Panc1 (cell line): ENCODE measurements at regions of chr6 and their contacts with region 1.

Region 1: GRCh38 chr6:146700078-146700686 is 101.4 kb downstream of the ADGB start:
- DNase-seq: peak; percentile 64
- ATAC-seq: peak; percentile 53; the same call in 1 of the 2 replicates
- H3K4me3 ChIP-seq: no peak overlapping the region
- H3K27ac ChIP-seq: no peak overlapping the region
- H3K4me1 ChIP-seq: no peaks in the 10 kb centered on the region
- H3K27me3 ChIP-seq: no peaks in the 10 kb centered on the region
- CTCF ChIP-seq: peak; percentile 77

Region 2: DNA sequence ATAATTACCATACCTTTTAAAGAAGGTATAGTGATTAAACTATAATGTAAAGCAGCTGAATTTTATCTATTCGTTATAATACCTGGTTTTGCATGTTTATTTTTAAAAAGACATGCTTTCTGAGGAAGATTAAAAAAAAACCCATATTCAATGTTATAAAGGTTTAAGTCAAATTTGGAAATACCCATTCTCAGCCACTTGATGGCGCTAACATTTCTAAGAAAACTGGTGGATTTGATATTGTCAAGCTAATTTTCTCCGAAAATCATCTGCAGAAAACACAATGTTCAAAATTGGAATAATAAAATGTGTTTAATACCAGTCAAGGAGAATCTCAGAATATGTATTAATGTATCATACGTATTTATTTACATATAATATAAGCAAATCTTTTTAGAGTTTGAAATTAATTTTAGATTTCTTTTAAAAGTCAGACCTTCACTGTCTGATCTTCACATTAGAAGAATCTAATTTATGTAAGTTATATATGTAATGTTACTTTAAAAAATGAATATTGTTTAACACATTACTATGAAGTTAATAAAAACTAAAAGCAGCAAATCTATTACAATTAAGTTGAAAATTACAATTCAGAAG is 771.0 kb before region 1 on chr6:
- CTCF ChIA-PET with region 1: no interaction called
- POLR2A ChIA-PET with region 1: no interaction called
- in situ Hi-C with region 1: no loop called
- intact Hi-C with region 1: loop called (anchors 10 kb)
- DNase-seq: peak; percentile 24
- ATAC-seq: no peak
- H3K4me3 ChIP-seq: no peak overlapping the region
- H3K27ac ChIP-seq: no peak overlapping the region
- H3K4me1 ChIP-seq: no peaks in the 10 kb centered on the region
- H3K27me3 ChIP-seq: no peaks in the 10 kb centered on the region
- CTCF ChIP-seq: peak; percentile 75; the same call in 1 of the 2 replicates

Region 3: DNA sequence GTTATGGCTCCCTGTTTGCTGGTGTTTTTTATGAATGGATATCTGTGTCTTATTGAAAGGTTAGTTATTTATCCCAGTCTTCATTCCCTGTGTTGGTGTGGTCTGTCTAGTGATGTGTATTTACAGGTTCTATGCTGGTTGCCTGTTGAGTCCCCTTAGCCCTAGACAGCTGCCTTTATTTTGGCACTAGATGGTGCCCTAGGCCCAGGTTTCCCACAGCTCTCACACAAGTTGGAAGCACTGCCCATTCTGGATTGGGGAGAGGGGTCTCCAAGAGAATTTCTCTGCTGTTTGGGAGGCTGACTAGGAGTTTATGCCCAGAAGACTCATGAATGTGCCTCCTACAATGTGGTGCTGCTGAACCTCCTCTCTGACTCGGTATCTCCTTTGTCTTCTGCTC is 658.9 kb before region 1 on chr6:
- CTCF ChIA-PET with region 1: no interaction called
- POLR2A ChIA-PET with region 1: no interaction called
- in situ Hi-C with region 1: no loop called
- intact Hi-C with region 1: loop called (anchors 5 kb)
- DNase-seq: peak; percentile 12
- ATAC-seq: peak; percentile 68; the same call in 1 of the 2 replicates
- H3K4me3 ChIP-seq: no peak overlapping the region
- H3K27ac ChIP-seq: no peak overlapping the region
- H3K4me1 ChIP-seq: no peaks in the 10 kb centered on the region
- H3K27me3 ChIP-seq: no peaks in the 10 kb centered on the region; the same call in 1 of the 2 replicates
- CTCF ChIP-seq: peak; percentile 62

Region 4: GRCh38 chr6:146543211-146543939 is 156.8 kb before region 1 on chr6 and contains the start of gene RAB32:
- CTCF ChIA-PET with region 1: no interaction called
- POLR2A ChIA-PET with region 1: no interaction called
- in situ Hi-C with region 1: no loop called
- intact Hi-C with region 1: loop called (anchors 1 kb)
- DNase-seq: no peak
- ATAC-seq: peak; percentile 99
- H3K4me3 ChIP-seq: peak within 1 kb of the TSS; percentile 89 to 95
- H3K27ac ChIP-seq: peak within 1 kb of the TSS; percentile 92
- H3K4me1 ChIP-seq: peaks cover 14% of the 10 kb centered on the region
- H3K27me3 ChIP-seq: no peaks in the 10 kb centered on the region
- CTCF ChIP-seq: peak; percentile 86
- total RNA-seq, gene RAB32: 61.5 TPM

Region 5: GRCh38 chr6:146719387-146719786 is 19.2 kb after region 1 on chr6:
- CTCF ChIA-PET with region 1: no interaction called
- POLR2A ChIA-PET with region 1: no interaction called
- in situ Hi-C with region 1: no loop called
- intact Hi-C with region 1: no loop called
- DNase-seq: no peak
- ATAC-seq: no peak
- H3K4me3 ChIP-seq: no peak overlapping the region
- H3K27ac ChIP-seq: no peak overlapping the region
- H3K4me1 ChIP-seq: no peaks in the 10 kb centered on the region
- H3K27me3 ChIP-seq: no peaks in the 10 kb centered on the region
- CTCF ChIP-seq: no peak

Region 6: DNA sequence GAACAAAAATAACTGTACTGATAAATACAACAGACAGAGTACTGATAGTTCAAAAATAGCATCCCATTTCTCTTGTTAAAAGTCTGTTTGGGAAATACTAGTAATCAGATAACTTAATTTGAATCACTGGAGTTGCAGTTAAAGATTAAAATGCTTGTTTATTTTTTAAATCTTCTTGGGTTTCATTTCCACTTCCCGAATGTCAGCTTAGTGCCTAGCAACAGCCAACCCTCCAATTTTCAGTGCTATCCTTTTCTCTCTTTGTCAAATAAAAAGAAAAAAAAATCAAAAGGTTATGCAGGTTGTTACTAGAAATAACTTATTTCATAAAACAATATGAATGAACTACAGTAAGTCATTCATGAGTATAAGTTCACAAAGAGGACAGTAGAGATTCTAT is 246.4 kb after region 1 on chr6:
- CTCF ChIA-PET with region 1: no interaction called
- POLR2A ChIA-PET with region 1: no interaction called
- in situ Hi-C with region 1: no loop called
- intact Hi-C with region 1: no loop called
- DNase-seq: no peak
- ATAC-seq: no peak
- H3K4me3 ChIP-seq: no peak overlapping the region
- H3K27ac ChIP-seq: peak overlapping the region; percentile 30; the same call in 1 of the 2 replicates
- H3K4me1 ChIP-seq: peaks cover 4% of the 10 kb centered on the region; the same call in 1 of the 2 replicates
- H3K27me3 ChIP-seq: no peaks in the 10 kb centered on the region
- CTCF ChIP-seq: no peak